Natural killer cell (primary cell): ENCODE measurements at regions of chr2 and their contacts with region 1.

Region 1: GRCh38 chr2:54665436-54665856 is 58.0 kb upstream of the EML6 start:
- DNase-seq: peak in 1 of 2 donors; percentile 72
- ATAC-seq: peak; percentile 36 to 64 (median 57)
- H3K4me3 ChIP-seq: no peak overlapping the region
- H3K4me3 Mint-ChIP-seq: no peak overlapping the region
- H3K27ac ChIP-seq: no peak overlapping the region
- H3K27ac Mint-ChIP-seq: peak overlapping the region in 1 of 2 donors; percentile 13
- H3K4me1 ChIP-seq: peaks cover 5% of the 10 kb centered on the region
- H3K4me1 Mint-ChIP-seq: peaks cover 0 to 5% of the 10 kb centered on the region in 2 donors
- H3K27me3 ChIP-seq: no peaks in the 10 kb centered on the region
- H3K27me3 Mint-ChIP-seq: no peaks in the 10 kb centered on the region
- CTCF ChIP-seq: peak; percentile 62

Region 2: GRCh38 chr2:54838585-54839035 is 173.2 kb after region 1 on chr2:
- intact Hi-C with region 1: loop called (anchors 10 kb)
- DNase-seq: peak; percentile 49 to 84
- ATAC-seq: peak; percentile 74 to 88 (median 86)
- H3K4me3 ChIP-seq: no peak overlapping the region
- H3K4me3 Mint-ChIP-seq: no peak overlapping the region
- H3K27ac ChIP-seq: no peak overlapping the region
- H3K27ac Mint-ChIP-seq: no peak overlapping the region
- H3K4me1 ChIP-seq: no peaks in the 10 kb centered on the region
- H3K4me1 Mint-ChIP-seq: no peaks in the 10 kb centered on the region
- H3K27me3 ChIP-seq: no peaks in the 10 kb centered on the region
- H3K27me3 Mint-ChIP-seq: peaks cover 0 to 3% of the 10 kb centered on the region in 2 donors
- CTCF ChIP-seq: peak; percentile 92